Posterior vena cava (tissue), 2 donors: ENCODE measurements at regions of chr14 and their contacts with region 1.

Region 1: GRCh38 chr14:103463149-103463548 is 59.5 kb downstream of the CKB start:
- DNase-seq: no peak

Region 2: GRCh38 chr14:103349982-103350381 is 113.2 kb before region 1 on chr14:
- intact Hi-C with region 1: loop called in 1 of 2 experiments (anchors 5 kb)
- DNase-seq: no peak